ENCODE measurements at regions of chr2 and their contacts with region 1.

Region 1: DNA sequence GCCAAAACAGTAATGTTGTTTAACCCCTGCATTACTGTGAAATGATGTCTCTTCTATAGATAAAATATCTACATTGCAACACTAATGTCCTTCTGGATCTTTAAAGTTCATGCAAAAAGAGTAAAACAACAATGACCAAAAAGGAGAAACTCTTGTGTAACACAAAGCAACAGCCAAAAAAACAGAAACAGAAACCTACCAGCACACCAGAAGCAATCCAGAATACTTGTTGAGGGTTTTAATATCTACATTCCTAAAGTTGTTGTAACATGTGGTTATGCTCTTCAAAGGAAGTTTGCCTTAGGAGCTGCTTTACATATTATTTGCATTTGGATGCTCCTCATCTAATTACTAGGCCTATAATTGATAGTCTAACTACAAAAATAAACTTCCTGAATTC is 157.2 kb downstream of the BABAM2 start:
- DNase-seq: peak; percentile 15
- ATAC-seq: no peak
- H3K4me3 ChIP-seq: no peak overlapping the region
- H3K27ac ChIP-seq: no peak overlapping the region
- H3K4me1 ChIP-seq: peaks cover 39% of the 10 kb centered on the region
- H3K27me3 ChIP-seq: no peaks in the 10 kb centered on the region
- CTCF ChIP-seq: no peak

Region 2: DNA sequence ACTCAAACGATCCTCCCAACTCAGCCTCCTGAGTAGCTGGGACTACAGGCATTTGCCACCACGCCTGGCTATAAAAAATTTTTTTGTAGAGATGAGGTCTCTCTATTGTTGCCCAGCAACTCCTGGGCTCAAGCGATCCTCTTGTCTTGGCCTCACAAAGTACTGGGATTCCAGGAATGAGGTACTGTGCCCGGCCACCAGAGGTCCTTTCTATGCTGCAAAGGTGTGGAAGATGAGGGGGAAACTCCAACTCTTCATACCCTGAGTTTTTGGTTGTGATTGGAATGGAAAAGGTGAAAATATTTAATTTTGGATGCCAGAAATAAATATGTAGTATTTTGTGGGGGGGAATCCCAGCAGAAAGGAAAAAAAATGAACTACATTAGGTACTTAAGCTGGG is 240.2 kb before region 1 on chr2:
- CTCF ChIA-PET with region 1: no interaction called
- POLR2A ChIA-PET with region 1: no interaction called
- intact Hi-C with region 1: loop called (anchors 10 kb)
- DNase-seq: peak; percentile 57
- ATAC-seq: peak; percentile 25; the same call in 1 of the 2 replicates
- H3K4me3 ChIP-seq: no peak overlapping the region
- H3K27ac ChIP-seq: no peak overlapping the region
- H3K4me1 ChIP-seq: peaks cover 28% of the 10 kb centered on the region
- H3K27me3 ChIP-seq: no peaks in the 10 kb centered on the region
- CTCF ChIP-seq: peak; percentile 79

Region 3: DNA sequence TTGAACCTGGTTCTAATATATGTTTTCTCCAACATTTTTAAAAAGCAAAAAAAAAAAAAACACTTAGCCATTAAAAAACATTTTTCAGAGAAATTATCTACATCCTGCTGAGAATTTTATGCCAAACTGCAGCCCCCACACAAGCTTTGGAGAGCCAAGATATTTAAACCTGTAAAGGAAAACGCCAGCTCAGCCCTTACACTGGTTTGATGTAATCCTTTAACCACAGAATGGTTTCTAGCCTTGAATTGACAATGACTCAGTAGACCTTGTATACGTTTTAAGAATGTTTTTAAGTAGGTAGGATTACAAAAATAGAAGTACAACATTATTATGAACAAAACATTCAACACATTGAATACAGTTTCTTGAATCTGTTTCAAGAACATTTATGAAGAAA is 43.6 kb before region 1 on chr2:
- CTCF ChIA-PET with region 1: no interaction called
- POLR2A ChIA-PET with region 1: interaction called, 18 read pairs
- intact Hi-C with region 1: no loop called
- DNase-seq: peak; percentile 81
- ATAC-seq: peak; percentile 72
- H3K4me3 ChIP-seq: no peak overlapping the region
- H3K27ac ChIP-seq: peak overlapping the region; percentile 5; the same call in 1 of the 2 replicates
- H3K4me1 ChIP-seq: peaks cover 13% of the 10 kb centered on the region
- H3K27me3 ChIP-seq: no peaks in the 10 kb centered on the region
- CTCF ChIP-seq: no peak

Region 4: GRCh38 chr2:28009732-28010131 is 37.9 kb before region 1 on chr2:
- CTCF ChIA-PET with region 1: no interaction called
- POLR2A ChIA-PET with region 1: interaction called, 18 read pairs
- intact Hi-C with region 1: no loop called
- DNase-seq: peak; percentile 37
- ATAC-seq: no peak
- H3K4me3 ChIP-seq: no peak overlapping the region
- H3K27ac ChIP-seq: no peak overlapping the region
- H3K4me1 ChIP-seq: peaks cover under 1% of the 10 kb centered on the region; the same call in 1 of the 2 replicates
- H3K27me3 ChIP-seq: no peaks in the 10 kb centered on the region
- CTCF ChIP-seq: no peak

Region 5: GRCh38 chr2:28030600-28030999 is 17.1 kb before region 1 on chr2:
- CTCF ChIA-PET with region 1: no interaction called
- POLR2A ChIA-PET with region 1: no interaction called
- intact Hi-C with region 1: no loop called
- DNase-seq: no peak
- ATAC-seq: no peak
- H3K4me3 ChIP-seq: no peak overlapping the region
- H3K27ac ChIP-seq: no peak overlapping the region
- H3K4me1 ChIP-seq: no peaks in the 10 kb centered on the region
- H3K27me3 ChIP-seq: no peaks in the 10 kb centered on the region
- CTCF ChIP-seq: no peak

Measured in PC-3 (cell line).